Activated T-helper 1 cell treated with anti-CD3 and anti-CD28 coated beads, Interleukin-12 subunit alpha, Interleukin-12 subunit beta, Interleukin-2, Interleukin-4 antibody, amounts not matched to agents 30 ng/mL and 10 ng/mL and 1 ng/mL, durations not matched to agents 14 hours and 24 hours and 36 hours (primary cell): ENCODE measurements at regions of chr6 and their contacts with region 1.

Region 1: GRCh38 chr6:108526739-108527174 is 34.0 kb upstream of the FOXO3 start:
- DNase-seq: no peak
- H3K4me3 Mint-ChIP-seq: no peak overlapping the region
- H3K27ac Mint-ChIP-seq: no peak overlapping the region
- H3K4me1 Mint-ChIP-seq: no peaks in the 10 kb centered on the region
- H3K27me3 Mint-ChIP-seq: peaks cover 25% of the 10 kb centered on the region

Region 2: GRCh38 chr6:108174371-108175175 is 352.2 kb before region 1 on chr6:
- intact Hi-C with region 1: loop called (anchors 10 kb)
- DNase-seq: peak; percentile 20
- H3K4me3 Mint-ChIP-seq: no peak overlapping the region
- H3K27ac Mint-ChIP-seq: no peak overlapping the region
- H3K4me1 Mint-ChIP-seq: peaks cover 5% of the 10 kb centered on the region
- H3K27me3 Mint-ChIP-seq: peaks cover 93% of the 10 kb centered on the region